Lower leg skin (tissue), 4 donors: ENCODE measurements at regions of chr7 and their contacts with region 1.

Region 1: DNA sequence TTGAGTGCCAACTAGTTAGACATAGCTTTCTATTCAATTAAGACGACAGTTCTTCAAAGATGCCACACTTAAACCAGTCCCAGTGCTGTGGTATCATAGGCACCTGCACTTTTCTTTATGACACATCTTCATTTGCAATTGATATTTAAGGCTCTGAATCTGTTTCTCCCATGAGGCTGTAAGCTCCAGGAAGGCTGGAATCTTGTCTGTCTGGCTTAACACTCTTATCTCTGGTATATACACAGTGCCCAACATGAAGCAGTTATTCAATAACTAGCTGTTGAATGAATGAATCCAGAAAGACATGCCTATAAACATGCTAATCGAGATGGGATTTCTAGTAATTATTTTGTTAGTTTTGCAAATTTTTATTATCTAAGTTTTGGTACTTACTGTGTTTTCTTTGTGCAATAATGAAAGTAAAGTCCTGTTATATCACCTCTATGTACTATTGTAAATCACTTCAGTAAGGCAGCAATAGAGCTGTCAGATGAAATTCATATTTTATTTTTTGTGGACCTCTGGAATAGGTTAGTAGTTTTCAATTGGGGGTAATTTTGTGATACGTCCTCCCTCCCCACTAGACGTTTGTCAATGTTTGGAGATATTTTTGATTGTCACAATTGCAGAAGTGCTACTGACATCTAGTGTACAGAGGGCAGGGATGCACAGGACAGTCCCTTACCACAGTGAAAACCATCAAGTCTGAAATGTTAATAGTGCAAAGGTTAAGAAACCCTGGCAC is 51.3 kb upstream of the STEAP4 start:
- DNase-seq: no peak
- H3K4me3 ChIP-seq: no peak overlapping the region
- CTCF ChIP-seq: no peak
- POLR2A ChIP-seq: no peak

Region 2: GRCh38 chr7:88243345-88243909 is 114.5 kb before region 1 on chr7:
- intact Hi-C with region 1: loop called (anchors 5 kb)
- DNase-seq: no peak
- H3K4me3 ChIP-seq: no peak overlapping the region
- CTCF ChIP-seq: peak in 1 of 3 donors; percentile 64
- POLR2A ChIP-seq: no peak